ENCODE measurements at regions of chr22 and their contacts with region 1.

Region 1: GRCh38 chr22:39170825-39171622 is 18.5 kb upstream of the CBX7 start:
- DNase-seq: peak; percentile 54 to 68
- ATAC-seq: peak; percentile 77 to 89
- H3K4me3 ChIP-seq: no peak overlapping the region
- H3K27ac ChIP-seq: peak overlapping the region; percentile 92 to 95
- H3K4me1 ChIP-seq: peaks cover 48% of the 10 kb centered on the region
- CTCF ChIP-seq: peak; percentile 84
- EP300 ChIP-seq: no peak
- POLR2A ChIP-seq: no peak
- RAD21 ChIP-seq: peak; percentile 93 to 96

Region 2: DNA sequence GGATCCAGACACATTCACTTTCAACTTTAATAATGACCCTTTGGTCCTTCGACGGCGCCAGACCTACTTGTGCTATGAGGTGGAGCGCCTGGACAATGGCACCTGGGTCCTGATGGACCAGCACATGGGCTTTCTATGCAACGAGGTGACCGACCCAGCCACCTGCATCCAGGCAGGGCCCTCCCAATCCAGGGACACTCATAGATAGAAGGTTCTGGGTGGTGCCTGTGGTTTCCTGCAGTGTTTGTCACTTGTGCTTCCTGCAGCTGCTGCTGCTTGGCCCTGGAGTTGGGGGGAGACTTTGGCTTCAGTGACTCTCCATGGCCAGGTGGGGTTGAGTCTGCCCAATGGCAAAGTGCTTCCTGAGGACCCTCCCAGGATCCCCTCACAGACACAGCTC is 181.6 kb before region 1 on chr22:
- CTCF ChIA-PET with region 1: no interaction called
- POLR2A ChIA-PET with region 1: no interaction called
- DNase-seq: no peak
- ATAC-seq: no peak
- H3K4me3 ChIP-seq: no peak overlapping the region
- H3K27ac ChIP-seq: no peak overlapping the region
- H3K4me1 ChIP-seq: no peaks in the 10 kb centered on the region
- CTCF ChIP-seq: no peak
- EP300 ChIP-seq: no peak
- POLR2A ChIP-seq: no peak
- RAD21 ChIP-seq: no peak

Region 3: GRCh38 chr22:39117585-39118191 is 53.3 kb before region 1 on chr22:
- CTCF ChIA-PET with region 1: no interaction called
- POLR2A ChIA-PET with region 1: no interaction called
- DNase-seq: peak; percentile 36 to 55
- ATAC-seq: peak in 1 of 2 experiments; percentile 61; a peak in 3 of 6 replicates
- H3K4me3 ChIP-seq: no peak overlapping the region
- H3K27ac ChIP-seq: no peak overlapping the region
- H3K4me1 ChIP-seq: peaks cover 2% of the 10 kb centered on the region; the same call in 1 of the 3 replicates
- CTCF ChIP-seq: peak; percentile 36
- EP300 ChIP-seq: no peak
- POLR2A ChIP-seq: no peak
- RAD21 ChIP-seq: peak; percentile 22 to 29; a peak in 2 of 5 replicates

Region 4: DNA sequence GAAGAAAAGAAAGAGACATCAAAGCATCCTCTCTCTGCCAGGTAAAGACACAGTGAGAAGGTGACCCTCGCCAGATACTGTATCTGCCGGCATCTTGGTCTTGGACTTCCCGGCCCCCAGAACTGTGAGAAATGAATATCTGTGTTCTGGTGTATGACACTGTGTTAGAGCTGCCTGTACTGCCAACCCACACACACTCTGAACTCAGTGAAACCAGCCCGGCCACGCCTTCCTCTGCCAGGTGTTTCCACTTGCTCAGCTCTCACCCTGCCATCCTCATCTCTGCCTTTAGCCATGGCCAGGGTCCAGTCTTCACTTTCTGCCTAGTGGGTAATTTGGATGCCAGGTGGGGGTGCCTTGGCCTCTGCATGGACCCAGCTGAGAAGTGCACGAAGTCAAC is 42.5 kb before region 1 on chr22:
- CTCF ChIA-PET with region 1: no interaction called
- POLR2A ChIA-PET with region 1: no interaction called
- DNase-seq: no peak
- ATAC-seq: no peak
- H3K4me3 ChIP-seq: no peak overlapping the region
- H3K27ac ChIP-seq: no peak overlapping the region
- H3K4me1 ChIP-seq: 0 out of 3 replicates have a peak, but pooled peaks cover 9% of the 10 kb centered on the region
- CTCF ChIP-seq: no peak
- EP300 ChIP-seq: no peak
- POLR2A ChIP-seq: no peak
- RAD21 ChIP-seq: no peak

Region 5: GRCh38 chr22:39230261-39231196 is 59.5 kb after region 1 on chr22:
- CTCF ChIA-PET with region 1: interaction called, 10 read pairs
- POLR2A ChIA-PET with region 1: no interaction called
- DNase-seq: no peak
- ATAC-seq: peak; percentile 60 to 67; a peak in 4 of 6 replicates
- H3K4me3 ChIP-seq: no peak overlapping the region
- H3K27ac ChIP-seq: no peak overlapping the region
- H3K4me1 ChIP-seq: peaks cover 2% of the 10 kb centered on the region; the same call in 1 of the 3 replicates
- CTCF ChIP-seq: no peak
- EP300 ChIP-seq: no peak
- POLR2A ChIP-seq: no peak
- RAD21 ChIP-seq: no peak

Region 6: GRCh38 chr22:39292561-39293098 is 121.6 kb after region 1 on chr22:
- CTCF ChIA-PET with region 1: interaction called, 19 read pairs
- POLR2A ChIA-PET with region 1: interaction called, 3 read pairs
- DNase-seq: peak; percentile 81 to 93
- ATAC-seq: peak; percentile 77 to 83
- H3K4me3 ChIP-seq: no peak overlapping the region
- H3K27ac ChIP-seq: peak overlapping the region; percentile 93 to 98
- H3K4me1 ChIP-seq: peaks cover 69% of the 10 kb centered on the region
- CTCF ChIP-seq: no peak
- EP300 ChIP-seq: no peak
- POLR2A ChIP-seq: no peak
- RAD21 ChIP-seq: 0 out of 5 replicates have a peak, but pooled peaks of 1 of the 2 experiments have one; percentile 2

Region 7: DNA sequence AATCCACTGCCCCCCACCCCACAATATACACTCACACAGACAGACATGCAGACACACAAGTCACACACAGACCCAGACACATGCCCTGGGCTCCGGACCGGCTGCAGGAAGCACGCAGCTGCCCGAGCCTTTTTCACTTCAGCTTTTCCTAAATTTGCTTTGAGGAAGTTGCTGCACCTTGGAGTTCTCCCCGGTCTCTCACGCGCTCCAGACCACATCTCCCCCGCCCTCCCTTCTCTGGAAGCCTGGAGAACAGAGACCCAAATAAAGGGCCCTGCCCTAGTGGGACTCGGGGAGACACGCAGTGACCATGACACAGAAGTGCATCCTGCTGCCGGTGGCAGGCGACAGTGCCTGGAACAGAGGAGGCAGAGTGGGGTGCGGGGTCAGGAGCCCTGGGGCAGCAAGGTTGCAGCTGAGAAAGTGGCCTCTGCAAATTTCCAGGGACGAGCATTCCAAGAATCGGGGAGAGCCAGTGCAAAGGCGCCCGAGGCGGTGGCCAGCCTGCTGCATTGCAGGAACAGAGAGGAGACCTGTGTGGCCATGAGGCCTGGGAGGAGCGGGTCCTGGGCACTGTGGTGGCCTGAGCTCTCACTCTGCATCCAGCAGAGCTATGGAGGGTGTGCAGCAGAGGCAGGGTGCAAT is 129.3 kb after region 1 on chr22:
- CTCF ChIA-PET with region 1: interaction called, 72 read pairs
- POLR2A ChIA-PET with region 1: no interaction called
- DNase-seq: no peak
- ATAC-seq: peak; percentile 46 to 64
- H3K4me3 ChIP-seq: no peak overlapping the region
- H3K27ac ChIP-seq: peak overlapping the region; percentile 78 to 86
- H3K4me1 ChIP-seq: peaks cover 49% of the 10 kb centered on the region
- CTCF ChIP-seq: no peak
- EP300 ChIP-seq: no peak
- POLR2A ChIP-seq: no peak
- RAD21 ChIP-seq: no peak

Region 8: DNA sequence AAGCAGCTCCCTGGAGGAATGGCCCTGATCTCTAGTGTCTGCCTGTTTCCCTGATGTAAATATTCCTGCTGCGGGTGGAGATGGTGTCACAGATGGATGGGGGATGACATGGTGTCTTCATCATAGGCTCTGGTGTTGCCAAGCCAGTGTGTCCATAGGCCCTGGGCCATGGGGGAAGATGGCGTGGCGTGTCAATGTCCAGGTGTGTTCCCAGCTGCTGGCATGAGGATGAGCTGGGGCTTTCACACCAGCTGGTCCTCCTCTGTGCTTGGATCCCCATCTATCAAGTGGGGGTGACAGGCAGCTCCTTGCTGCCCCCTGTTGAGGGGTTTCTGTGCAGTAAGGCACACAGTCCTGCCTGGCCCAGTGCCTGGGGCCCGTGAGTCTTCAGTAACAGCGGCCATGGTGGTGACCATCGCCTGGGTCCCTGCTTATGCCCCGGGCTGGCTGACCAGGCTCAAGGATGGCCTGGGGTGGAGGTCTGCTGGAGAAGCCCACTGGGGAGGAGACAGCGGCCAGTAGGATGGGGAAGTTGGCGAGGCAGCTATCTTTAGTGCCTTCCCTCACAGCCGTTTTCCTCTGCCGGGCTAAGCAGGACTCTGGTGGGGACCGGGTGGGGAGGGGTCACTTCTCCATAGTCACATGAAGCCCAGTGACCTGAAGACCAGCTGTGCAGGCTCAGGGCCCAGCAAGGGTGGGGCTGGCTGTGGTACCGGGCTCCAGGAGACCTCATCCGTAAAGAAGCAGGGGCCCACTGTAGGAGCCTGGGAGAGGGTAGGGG is 135.7 kb after region 1 on chr22:
- CTCF ChIA-PET with region 1: interaction called, 96 read pairs
- POLR2A ChIA-PET with region 1: interaction called, 5 read pairs
- DNase-seq: peak in 1 of 2 experiments; percentile 54
- ATAC-seq: 0 out of 6 replicates have a peak, but pooled peaks of 1 of the 2 experiments have one; percentile 3
- H3K4me3 ChIP-seq: no peak overlapping the region
- H3K27ac ChIP-seq: peak overlapping the region; percentile 94 to 95; a peak in 5 of 6 replicates
- H3K4me1 ChIP-seq: peaks cover 33% of the 10 kb centered on the region
- CTCF ChIP-seq: peak; percentile 33; the same call in 2 of the 3 replicates
- EP300 ChIP-seq: no peak
- POLR2A ChIP-seq: no peak
- RAD21 ChIP-seq: peak; percentile 52 to 72

Measured in A549 (cell line).